SK-N-SH (cell line): ENCODE measurements at regions of chr20 and their contacts with region 1.

Region 1: GRCh38 chr20:3710703-3711483 is 1.5 kb downstream of the SIGLEC1 start:
- DNase-seq: peak; percentile 93
- H3K4me3 ChIP-seq: peak overlapping the region in 1 of 2 experiments; percentile 43; a peak in 1 of 4 replicates
- H3K27ac ChIP-seq: no peak overlapping the region
- H3K4me1 ChIP-seq: no peaks in the 10 kb centered on the region
- H3K27me3 ChIP-seq: no peaks in the 10 kb centered on the region
- CTCF ChIP-seq: peak; percentile 91
- EP300 ChIP-seq: no peak
- RAD21 ChIP-seq: peak; percentile 76

Region 2: DNA sequence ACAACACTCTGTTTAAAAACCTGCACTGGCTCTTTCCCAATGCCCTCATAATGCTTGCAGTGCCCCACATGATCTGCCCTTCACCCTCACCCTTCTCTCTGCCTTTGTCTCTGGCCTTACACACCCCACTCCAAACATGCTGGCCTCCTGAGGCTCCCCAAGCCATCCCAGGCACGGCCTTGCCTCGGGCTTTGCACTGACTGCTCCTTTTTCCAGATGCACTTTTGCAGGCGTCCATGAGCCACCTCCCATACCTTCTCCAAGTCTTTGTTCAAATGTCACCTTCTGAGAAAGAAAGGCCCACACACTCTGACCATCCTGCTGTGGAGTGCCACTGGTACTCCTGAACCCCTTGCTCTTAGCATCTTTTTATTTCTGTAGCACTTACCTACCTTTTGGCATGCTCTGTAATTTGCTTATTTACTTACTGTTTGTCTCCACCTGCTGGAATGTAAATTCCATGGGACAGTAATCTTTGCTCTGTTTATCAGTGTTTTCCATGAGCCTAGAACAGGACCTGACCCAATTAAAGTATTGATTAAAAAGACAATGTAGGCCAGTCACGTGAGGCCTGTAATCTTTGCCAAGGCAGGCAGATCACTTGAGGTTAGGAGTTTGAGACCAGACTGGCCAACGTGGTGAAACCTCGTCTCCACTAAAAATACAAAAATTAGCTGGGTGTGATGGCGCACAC is 78.4 kb before region 1 on chr20:
- CTCF ChIA-PET with region 1: interaction called, 10 read pairs
- POLR2A ChIA-PET with region 1: no interaction called
- DNase-seq: no peak
- H3K4me3 ChIP-seq: no peak overlapping the region
- H3K27ac ChIP-seq: no peak overlapping the region
- H3K4me1 ChIP-seq: no peaks in the 10 kb centered on the region
- H3K27me3 ChIP-seq: no peaks in the 10 kb centered on the region
- CTCF ChIP-seq: no peak; the same call in 1 of the 2 replicates
- EP300 ChIP-seq: no peak
- RAD21 ChIP-seq: no peak; the same call in 1 of the 2 replicates

Region 3: GRCh38 chr20:3686867-3687321 is 24.0 kb before region 1 on chr20:
- CTCF ChIA-PET with region 1: interaction called, 301 read pairs
- POLR2A ChIA-PET with region 1: no interaction called
- DNase-seq: no peak
- H3K4me3 ChIP-seq: no peak overlapping the region
- H3K27ac ChIP-seq: no peak overlapping the region
- H3K4me1 ChIP-seq: no peaks in the 10 kb centered on the region
- H3K27me3 ChIP-seq: no peaks in the 10 kb centered on the region
- CTCF ChIP-seq: no peak
- EP300 ChIP-seq: no peak
- RAD21 ChIP-seq: no peak

Region 4: DNA sequence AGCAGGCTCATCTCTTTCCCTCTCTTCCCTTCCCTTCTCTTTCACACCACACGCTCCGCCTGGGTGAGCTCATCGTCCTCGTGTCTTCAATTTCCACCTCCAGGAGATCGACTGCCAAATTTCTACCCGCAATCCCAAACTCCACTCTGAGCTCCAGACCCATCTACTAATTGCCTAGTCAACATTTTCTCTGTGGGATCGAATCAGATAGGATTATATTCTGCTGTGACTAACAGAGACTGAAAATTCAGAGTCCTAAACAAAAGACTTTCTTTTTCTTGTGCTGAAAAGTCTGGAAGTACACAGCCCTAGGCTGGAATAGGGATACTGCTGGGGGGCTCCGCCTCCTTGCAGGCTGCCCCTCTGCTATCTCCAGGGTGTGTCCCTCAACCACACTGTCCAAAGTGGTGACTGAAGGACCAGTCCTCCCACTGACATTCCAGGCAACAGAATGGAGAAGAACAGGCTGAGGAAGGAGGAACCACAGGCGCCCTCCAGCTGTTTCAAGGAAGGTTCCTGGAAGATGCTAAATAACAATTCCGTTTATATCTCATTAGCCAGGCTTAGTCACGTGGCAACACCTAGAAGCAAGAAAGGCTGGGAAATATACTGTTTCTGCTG is 16.6 kb after region 1 on chr20:
- CTCF ChIA-PET with region 1: interaction called, 20 read pairs
- POLR2A ChIA-PET with region 1: no interaction called
- DNase-seq: no peak
- H3K4me3 ChIP-seq: no peak overlapping the region
- H3K27ac ChIP-seq: no peak overlapping the region
- H3K4me1 ChIP-seq: no peaks in the 10 kb centered on the region; a peak in 1 of 4 replicates
- H3K27me3 ChIP-seq: peaks cover 40% of the 10 kb centered on the region
- CTCF ChIP-seq: no peak
- EP300 ChIP-seq: no peak
- RAD21 ChIP-seq: no peak

Region 5: GRCh38 chr20:3744806-3745685 is 34.2 kb after region 1 on chr20:
- CTCF ChIA-PET with region 1: interaction called, 60 read pairs
- POLR2A ChIA-PET with region 1: no interaction called
- DNase-seq: peak; percentile 90
- H3K4me3 ChIP-seq: peak overlapping the region in 1 of 2 experiments; percentile 34; a peak in 2 of 4 replicates
- H3K27ac ChIP-seq: no peak overlapping the region
- H3K4me1 ChIP-seq: peaks cover 0 to 21% of the 10 kb centered on the region in 2 experiments; a peak in 1 of 4 replicates
- H3K27me3 ChIP-seq: no peaks in the 10 kb centered on the region
- CTCF ChIP-seq: no peak
- EP300 ChIP-seq: no peak
- RAD21 ChIP-seq: no peak

Region 6: GRCh38 chr20:3760655-3761348 is 49.9 kb after region 1 on chr20:
- CTCF ChIA-PET with region 1: interaction called, 13 read pairs
- POLR2A ChIA-PET with region 1: no interaction called
- DNase-seq: no peak
- H3K4me3 ChIP-seq: no peak overlapping the region
- H3K27ac ChIP-seq: no peak overlapping the region
- H3K4me1 ChIP-seq: peaks cover 0 to 3% of the 10 kb centered on the region in 2 experiments; a peak in 1 of 4 replicates
- H3K27me3 ChIP-seq: no peaks in the 10 kb centered on the region
- CTCF ChIP-seq: no peak
- EP300 ChIP-seq: no peak
- RAD21 ChIP-seq: no peak

Region 7: GRCh38 chr20:4076671-4077070 is 365.8 kb after region 1 on chr20:
- CTCF ChIA-PET with region 1: no interaction called
- POLR2A ChIA-PET with region 1: no interaction called
- DNase-seq: no peak
- H3K4me3 ChIP-seq: peak overlapping the region in 1 of 2 experiments; percentile 16; a peak in 1 of 4 replicates
- H3K27ac ChIP-seq: peak overlapping the region; percentile 58 to 90; a peak in 3 of 4 replicates
- H3K4me1 ChIP-seq: peaks cover 0 to 11% of the 10 kb centered on the region in 2 experiments; a peak in 2 of 4 replicates
- H3K27me3 ChIP-seq: no peaks in the 10 kb centered on the region
- CTCF ChIP-seq: no peak
- EP300 ChIP-seq: peak; percentile 33 to 92; a peak in 3 of 4 replicates
- RAD21 ChIP-seq: no peak